ENCODE measurements at regions of chr2 and their contacts with region 1.

Region 1: DNA sequence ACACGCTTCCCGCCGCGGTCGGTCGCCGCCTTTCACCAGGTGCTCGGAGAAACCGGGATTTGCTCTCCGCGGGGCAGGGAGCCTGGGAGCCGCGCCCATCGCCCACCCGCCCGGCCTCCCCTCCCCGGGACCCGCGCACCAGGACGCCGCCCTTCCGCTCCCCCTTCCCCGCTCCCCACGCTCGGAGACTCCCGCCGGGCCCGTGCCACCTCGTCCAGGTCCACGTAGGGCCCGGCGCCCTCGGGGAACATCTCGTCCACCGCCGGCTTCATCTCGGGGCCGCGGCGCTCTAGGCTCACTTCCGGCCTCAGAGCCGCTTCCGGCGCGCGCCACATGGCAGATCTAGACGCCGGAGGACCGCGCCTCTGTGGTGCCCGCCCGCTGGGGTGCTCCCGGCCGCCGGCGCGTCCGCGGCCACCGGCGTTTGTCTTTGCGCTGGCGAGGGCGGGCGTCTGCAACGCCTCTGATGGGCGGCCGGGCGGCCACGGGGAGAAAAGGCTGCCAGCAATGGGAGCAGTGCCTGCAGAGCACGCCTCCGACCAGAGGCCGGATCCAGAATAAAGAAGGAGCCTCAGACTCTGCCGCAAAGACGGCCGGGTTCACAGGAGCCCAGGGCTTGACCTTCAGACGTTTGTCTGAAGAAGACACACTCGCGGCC is at the start of gene COPS9:
- DNase-seq: peak; percentile 96
- H3K4me3 Mint-ChIP-seq: peak within 1 kb of the TSS; percentile 94
- H3K27ac Mint-ChIP-seq: peak within 1 kb of the TSS; percentile 87
- H3K4me1 Mint-ChIP-seq: peaks cover 21% of the 10 kb centered on the region
- H3K27me3 Mint-ChIP-seq: no peaks in the 10 kb centered on the region
- total RNA-seq, gene COPS9: 132 and 135 TPM in 2 replicates

Region 2: GRCh38 chr2:239991689-239992314 is 144.3 kb before region 1 on chr2:
- intact Hi-C with region 1: no loop called
- DNase-seq: peak; percentile 73
- H3K4me3 Mint-ChIP-seq: no peak overlapping the region
- H3K27ac Mint-ChIP-seq: no peak overlapping the region
- H3K4me1 Mint-ChIP-seq: no peaks in the 10 kb centered on the region
- H3K27me3 Mint-ChIP-seq: no peaks in the 10 kb centered on the region

Region 3: GRCh38 chr2:240024766-240025165 is 111.4 kb before region 1 on chr2:
- intact Hi-C with region 1: loop called (anchors 1 kb)
- DNase-seq: no peak
- H3K4me3 Mint-ChIP-seq: peak overlapping the region; percentile 88
- H3K27ac Mint-ChIP-seq: peak overlapping the region; percentile 94
- H3K4me1 Mint-ChIP-seq: peaks cover 17% of the 10 kb centered on the region
- H3K27me3 Mint-ChIP-seq: peaks cover 5% of the 10 kb centered on the region

Region 4: DNA sequence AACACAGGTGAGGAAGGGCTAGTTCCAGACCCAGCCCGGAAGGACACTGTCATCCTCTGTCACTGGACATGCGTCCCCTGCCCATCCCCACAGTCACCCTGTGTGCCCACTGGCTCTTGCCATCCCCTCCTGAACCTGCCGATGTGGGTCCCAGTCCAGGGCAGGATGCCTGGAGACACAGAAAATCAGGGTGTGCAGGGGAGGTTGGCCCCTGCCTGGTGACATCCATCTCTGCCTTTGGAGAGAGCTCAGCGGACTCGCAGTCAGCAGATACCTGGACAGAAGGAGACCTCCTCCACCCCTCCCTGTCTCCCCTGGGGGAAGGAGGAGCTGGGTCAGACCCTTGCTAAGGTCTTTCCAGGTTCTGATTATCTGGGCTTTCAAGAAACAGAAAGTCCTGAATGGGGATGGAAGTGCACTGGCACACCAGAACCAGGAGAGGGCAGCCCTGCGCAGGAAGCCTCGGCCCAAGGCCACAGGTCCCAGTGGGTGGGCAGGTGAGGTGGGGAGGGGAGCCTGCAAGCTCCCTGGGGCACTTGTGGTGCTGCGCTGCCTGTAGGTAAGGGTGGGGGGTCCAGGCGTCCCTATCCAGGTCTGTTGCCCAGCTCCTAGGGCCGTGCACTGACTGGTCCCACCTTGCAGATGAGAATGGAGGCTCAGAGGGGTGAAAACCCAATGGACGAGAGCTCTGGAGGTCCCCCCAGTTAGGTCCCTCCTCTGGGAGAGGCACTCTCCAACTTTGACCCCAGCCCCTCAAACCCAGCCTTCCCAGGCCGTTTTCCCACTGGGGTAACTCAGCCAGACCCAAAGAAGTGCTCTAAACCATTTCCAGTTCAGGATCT is 14.0 kb after region 1 on chr2:
- intact Hi-C with region 1: no loop called
- DNase-seq: peak; percentile 81
- H3K4me3 Mint-ChIP-seq: no peak overlapping the region
- H3K27ac Mint-ChIP-seq: no peak overlapping the region
- H3K4me1 Mint-ChIP-seq: peaks cover 2% of the 10 kb centered on the region
- H3K27me3 Mint-ChIP-seq: peaks cover 2% of the 10 kb centered on the region

Region 5: DNA sequence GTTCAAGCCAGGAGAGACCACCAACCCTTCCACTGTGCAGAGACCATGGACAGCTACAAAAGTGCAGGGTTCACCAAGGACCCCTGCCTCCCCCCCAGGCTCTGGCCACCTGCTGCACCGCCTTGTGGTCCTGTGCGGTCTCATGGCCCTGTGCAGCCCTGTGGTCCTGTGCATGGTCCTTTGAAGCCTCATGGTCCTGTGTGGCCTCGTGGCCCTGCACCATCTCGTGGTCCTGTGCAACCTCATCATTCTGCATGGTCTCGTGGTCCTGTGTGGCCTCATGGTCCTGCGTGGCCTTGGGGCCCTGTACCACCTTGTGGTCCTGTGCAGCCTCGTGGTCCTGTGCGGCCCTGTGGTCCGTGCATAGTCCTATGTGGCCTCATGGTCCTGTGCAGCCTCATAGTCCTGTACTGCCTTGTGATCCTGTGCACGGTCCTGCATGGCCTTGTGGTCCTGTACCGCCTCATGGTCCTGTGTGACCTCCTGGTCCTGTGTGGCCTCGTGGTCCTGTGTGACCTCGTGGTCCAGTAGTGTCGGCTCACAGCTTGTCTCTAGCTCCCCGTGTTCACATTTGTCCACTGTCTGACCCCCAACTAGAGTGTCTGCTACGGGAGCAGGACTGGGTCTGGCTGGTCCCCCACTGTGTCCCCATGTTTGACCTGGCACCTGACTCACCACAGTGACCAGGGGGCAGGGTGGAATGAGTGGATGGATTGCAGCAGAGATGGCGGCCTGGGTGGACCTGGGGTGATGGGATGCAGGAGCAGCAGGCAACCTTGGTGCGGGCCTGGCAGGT is 24.3 kb after region 1 on chr2:
- intact Hi-C with region 1: no loop called
- DNase-seq: no peak
- H3K4me3 Mint-ChIP-seq: no peak overlapping the region
- H3K27ac Mint-ChIP-seq: no peak overlapping the region
- H3K4me1 Mint-ChIP-seq: no peaks in the 10 kb centered on the region
- H3K27me3 Mint-ChIP-seq: no peaks in the 10 kb centered on the region